ENCODE measurements at regions of chr9 and their contacts with region 1.

Region 1: GRCh38 chr9:134732392-134733110 is 90.9 kb downstream of the COL5A1 start:
- DNase-seq: peak; percentile 64
- ATAC-seq: peak; percentile 18

Region 2: GRCh38 chr9:134712926-134713325 is 19.6 kb before region 1 on chr9:
- intact Hi-C with region 1: loop called (anchors 2 kb)
- DNase-seq: peak; percentile 80
- ATAC-seq: peak; percentile 84

Measured in Right ventricle myocardium inferior (tissue), 1 donor.